ENCODE measurements at regions of chr22 and their contacts with region 1.

Region 1: GRCh38 chr22:35589071-35589952 is 27.8 kb downstream of the MB start:
- DNase-seq: peak; percentile 91 to 96 (median 93)
- H3K4me3 ChIP-seq: no peak overlapping the region
- H3K4me3 Mint-ChIP-seq: no peak overlapping the region
- H3K27ac ChIP-seq: peak overlapping the region; percentile 24 to 46
- H3K27ac Mint-ChIP-seq: peak overlapping the region; percentile 25 to 86 (median 79)
- H3K4me1 ChIP-seq: peaks cover 23 to 27% of the 10 kb centered on the region in 2 donors
- H3K4me1 Mint-ChIP-seq: peaks cover 24% of the 10 kb centered on the region
- H3K27me3 ChIP-seq: no peaks in the 10 kb centered on the region
- H3K27me3 Mint-ChIP-seq: peaks cover 6 to 8% (median 7%) of the 10 kb centered on the region in 3 donors
- CTCF ChIP-seq: no peak

Region 2: DNA sequence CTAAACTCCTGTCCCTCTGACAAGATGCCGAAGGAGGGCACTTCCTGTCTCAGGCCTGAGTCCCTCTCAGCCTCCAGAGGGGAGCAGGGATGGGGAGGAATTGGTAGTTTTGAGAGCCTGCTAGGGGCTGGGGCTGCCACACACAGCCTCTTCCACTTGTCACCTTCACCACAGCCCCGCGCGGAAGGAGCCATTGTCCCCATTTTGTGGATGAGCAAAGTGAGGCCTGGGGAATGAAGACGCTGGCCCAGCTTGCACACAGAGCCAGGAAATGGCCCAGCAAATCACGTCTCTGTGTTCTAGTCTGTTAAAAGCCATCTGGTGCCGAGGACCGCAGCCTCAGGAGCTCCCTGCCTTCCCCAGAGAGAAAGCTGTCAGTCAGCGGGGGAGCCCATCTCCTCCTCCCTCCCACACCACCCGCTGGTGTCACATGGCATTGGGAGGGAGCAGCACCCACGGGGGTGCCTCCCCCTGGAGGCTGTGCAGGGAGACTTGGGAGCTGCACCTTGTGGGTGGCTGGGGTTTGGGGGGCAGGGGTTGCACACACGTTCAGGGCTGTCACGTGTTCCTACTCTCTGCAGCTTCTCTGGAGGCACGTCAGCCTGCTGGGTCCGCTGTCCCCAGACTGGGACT is 14.1 kb before region 1 on chr22:
- intact Hi-C with region 1: no loop called
- DNase-seq: no peak
- H3K4me3 ChIP-seq: no peak overlapping the region
- H3K4me3 Mint-ChIP-seq: no peak overlapping the region
- H3K27ac ChIP-seq: no peak overlapping the region
- H3K27ac Mint-ChIP-seq: no peak overlapping the region
- H3K4me1 ChIP-seq: no peaks in the 10 kb centered on the region
- H3K4me1 Mint-ChIP-seq: peaks cover 3% of the 10 kb centered on the region
- H3K27me3 ChIP-seq: peaks cover 0 to 2% of the 10 kb centered on the region in 2 donors
- H3K27me3 Mint-ChIP-seq: peaks cover 6 to 8% (median 8%) of the 10 kb centered on the region in 3 donors
- CTCF ChIP-seq: no peak

Region 3: GRCh38 chr22:35601743-35602630 is 12.7 kb after region 1 on chr22:
- intact Hi-C with region 1: loop called in 1 of 2 experiments (anchors 2 kb)
- DNase-seq: peak; percentile 95 to 97 (median 96)
- H3K4me3 ChIP-seq: peak overlapping the region in 1 of 3 experiments; percentile 14
- H3K4me3 Mint-ChIP-seq: peak overlapping the region; percentile 20 to 39
- H3K27ac ChIP-seq: peak overlapping the region; percentile 61 to 87
- H3K27ac Mint-ChIP-seq: no peak overlapping the region
- H3K4me1 ChIP-seq: peaks cover 68 to 73% of the 10 kb centered on the region in 2 donors
- H3K4me1 Mint-ChIP-seq: peaks cover 30% of the 10 kb centered on the region
- H3K27me3 ChIP-seq: no peaks in the 10 kb centered on the region
- H3K27me3 Mint-ChIP-seq: peaks cover 8 to 12% (median 9%) of the 10 kb centered on the region in 3 donors
- CTCF ChIP-seq: no peak

Measured in CD14-positive monocyte (primary cell).